Heart right ventricle (tissue), 16 donors: ENCODE measurements at regions of chr16 and their contacts with region 1.

Region 1: GRCh38 chr16:68843482-68844210 is at the start of gene TANGO6:
- DNase-seq: peak; percentile 86 to 88
- ATAC-seq: peak; percentile 98 to 99 (median 98)
- H3K4me3 ChIP-seq: peak within 1 kb of the TSS; percentile 73 to 99 (median 92)
- H3K27ac ChIP-seq: peak within 1 kb of the TSS; percentile 81 to 95 (median 88)
- H3K4me1 ChIP-seq: peaks cover 0 to 21% (median 10%) of the 10 kb centered on the region in 9 donors
- H3K27me3 ChIP-seq: peaks cover 0 to 6% (median 0%) of the 10 kb centered on the region in 7 donors
- CTCF ChIP-seq: peak in 5 of 9 donors; percentile 11 to 29 (median 20)
- total RNA-seq, gene TANGO6: 6.7 to 12.9 (median 8.4) TPM

Region 2: GRCh38 chr16:68538880-68539701 is 304.6 kb before region 1 on chr16 and contains the start of gene ZFP90:
- intact Hi-C with region 1: loop called in 2 of 10 experiments (anchors 5 to 10 kb)
- DNase-seq: peak; percentile 88 to 94
- ATAC-seq: peak; percentile 99 to 100 (median 99)
- H3K4me3 ChIP-seq: peak within 1 kb of the TSS; percentile 84 to 99 (median 95)
- H3K27ac ChIP-seq: peak within 1 kb of the TSS; percentile 19 to 91 (median 82)
- H3K4me1 ChIP-seq: peaks cover 0 to 16% (median 9%) of the 10 kb centered on the region in 9 donors
- H3K27me3 ChIP-seq: no peaks in the 10 kb centered on the region
- CTCF ChIP-seq: no peak
- total RNA-seq, gene ZFP90: 9.1 to 15.6 (median 12.2) TPM

Region 3: DNA sequence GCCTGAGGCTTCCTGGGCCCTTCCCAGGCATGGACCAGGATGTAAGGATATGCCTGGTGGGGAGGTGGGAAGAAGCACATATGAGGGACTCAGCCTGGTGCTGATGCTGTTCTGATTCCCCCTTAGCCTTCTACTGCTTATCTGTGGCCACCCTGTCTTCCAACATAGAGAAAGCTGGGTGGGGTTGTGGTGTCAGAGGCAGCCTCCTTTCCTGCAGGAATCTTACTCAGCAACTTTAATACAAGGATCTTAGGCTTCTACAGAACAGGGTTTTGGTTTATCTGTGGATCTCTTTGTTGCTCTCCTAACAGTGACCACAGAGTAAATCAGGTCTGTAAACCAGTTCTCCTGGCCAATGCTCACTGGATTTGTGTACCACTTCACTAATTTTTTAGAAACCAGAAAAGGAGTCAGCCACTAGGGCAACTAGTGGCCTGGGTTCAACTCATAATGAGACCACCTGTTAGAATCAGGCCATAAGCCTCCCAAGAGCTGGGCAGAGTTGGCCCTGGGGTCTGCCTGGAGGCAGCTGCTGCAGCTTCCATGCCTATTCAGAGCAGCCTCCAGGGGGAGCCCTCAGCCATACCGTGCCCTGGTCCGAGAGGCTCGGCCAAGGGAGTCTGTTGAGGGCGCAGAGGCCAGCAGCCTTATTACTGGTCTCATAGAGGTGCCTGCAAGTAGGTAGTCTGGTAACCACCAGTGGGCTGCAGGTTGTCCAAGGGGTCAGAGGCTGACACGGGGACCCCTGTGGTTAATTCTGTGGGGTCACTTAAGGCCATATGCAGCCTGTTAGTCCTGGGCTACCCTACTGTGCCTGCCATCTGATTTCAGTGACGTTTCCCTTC is 268.9 kb after region 1 on chr16:
- intact Hi-C with region 1: loop called in 1 of 10 experiments (anchors 10 kb)
- DNase-seq: peak; percentile 45 to 62
- ATAC-seq: peak in 6 of 8 donors; percentile 39 to 63 (median 50)
- H3K4me3 ChIP-seq: no peak overlapping the region
- H3K27ac ChIP-seq: no peak overlapping the region
- H3K4me1 ChIP-seq: peaks cover 9 to 50% (median 24%) of the 10 kb centered on the region in 9 donors
- H3K27me3 ChIP-seq: peaks cover 0 to 15% (median 0%) of the 10 kb centered on the region in 7 donors
- CTCF ChIP-seq: peak; percentile 23 to 78 (median 68)

Region 4: DNA sequence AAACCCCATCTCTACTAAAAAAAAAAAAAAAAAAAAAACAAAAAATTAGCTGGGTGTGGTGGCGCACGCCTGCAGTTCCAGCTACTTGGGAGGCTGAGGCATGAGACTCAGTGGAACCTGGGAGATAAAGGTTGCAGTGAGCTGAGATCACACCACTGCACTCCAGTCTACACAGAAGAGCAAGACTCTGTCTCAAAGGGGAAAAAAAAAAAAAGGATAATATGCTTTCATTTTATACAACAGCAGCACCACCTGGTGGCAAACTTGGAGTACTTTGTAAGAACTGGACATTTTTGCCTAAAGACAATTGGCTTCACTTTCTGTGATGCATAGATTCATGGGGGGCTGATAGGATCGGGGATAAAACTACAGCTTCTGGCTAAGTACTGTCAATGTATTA is 280.3 kb after region 1 on chr16:
- intact Hi-C with region 1: loop called in 7 of 10 experiments (anchors 2 to 10 kb)
- DNase-seq: peak in 1 of 2 donors; percentile 56
- ATAC-seq: peak in 6 of 8 donors; percentile 29 to 52 (median 32)
- H3K4me3 ChIP-seq: no peak overlapping the region
- H3K27ac ChIP-seq: no peak overlapping the region
- H3K4me1 ChIP-seq: peaks cover 0 to 27% (median 14%) of the 10 kb centered on the region in 9 donors
- H3K27me3 ChIP-seq: no peaks in the 10 kb centered on the region
- CTCF ChIP-seq: peak; percentile 41 to 77 (median 69)

Region 5: DNA sequence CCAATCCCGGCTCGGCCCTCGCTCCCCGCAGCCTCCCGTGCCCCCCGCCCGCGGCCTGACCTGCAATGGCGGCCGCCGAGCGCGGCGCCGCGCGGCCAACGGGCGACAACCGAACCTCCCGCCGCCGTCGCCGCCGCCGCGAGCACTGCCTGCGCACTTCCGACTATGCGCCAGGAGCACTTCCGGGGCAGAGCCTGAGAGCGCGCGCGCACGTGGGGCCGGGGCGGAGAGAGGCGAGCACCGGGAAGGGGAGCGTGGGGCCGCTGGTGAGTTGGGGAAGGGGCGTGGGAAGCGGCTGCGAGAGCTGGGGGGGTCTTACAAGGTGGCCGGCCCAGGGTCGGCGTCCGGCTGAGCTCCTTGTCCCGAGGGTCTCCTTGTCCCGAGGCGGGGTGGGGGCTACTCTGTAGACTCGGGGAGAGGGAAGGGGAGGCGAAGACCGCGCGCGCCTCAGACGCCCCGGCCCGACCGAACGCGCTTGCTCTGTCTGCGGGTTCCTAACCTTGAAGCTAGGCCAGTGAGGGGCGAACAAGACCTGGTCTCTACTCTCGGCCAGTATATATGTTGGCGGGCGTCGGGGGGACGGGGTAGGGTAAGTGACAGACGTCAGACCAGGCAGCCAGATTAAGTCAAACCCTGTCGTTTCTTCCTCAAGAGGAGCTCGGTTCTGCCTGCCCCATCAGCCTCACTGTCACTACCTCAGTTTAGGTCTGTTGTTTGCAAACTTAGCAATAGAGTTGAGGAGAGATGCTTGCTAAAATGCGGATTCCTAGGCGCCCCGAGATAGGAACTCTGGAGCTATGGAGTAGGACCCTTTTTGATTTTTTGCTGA is 289.0 kb after region 1 on chr16 and contains the starts of genes CHTF8 and UTP4:
- intact Hi-C with region 1: loop called in 3 of 10 experiments (anchors 5 to 10 kb)
- DNase-seq: peak; percentile 87
- ATAC-seq: peak; percentile 94 to 97 (median 96)
- H3K4me3 ChIP-seq: peak within 1 kb of the TSS; percentile 54 to 99 (median 92)
- H3K27ac ChIP-seq: peak within 1 kb of the TSS; percentile 82 to 97 (median 92)
- H3K4me1 ChIP-seq: peaks cover 4 to 39% (median 29%) of the 10 kb centered on the region in 9 donors
- H3K27me3 ChIP-seq: no peaks in the 10 kb centered on the region
- CTCF ChIP-seq: no peak
- total RNA-seq, gene CHTF8: 46.1 to 80.6 (median 55.6) TPM
- total RNA-seq, gene UTP4: 19.1 to 32.8 (median 26.8) TPM